Mammary epithelial cell (primary cell): ENCODE measurements at regions of chr3 and their contacts with region 1.

Region 1: DNA sequence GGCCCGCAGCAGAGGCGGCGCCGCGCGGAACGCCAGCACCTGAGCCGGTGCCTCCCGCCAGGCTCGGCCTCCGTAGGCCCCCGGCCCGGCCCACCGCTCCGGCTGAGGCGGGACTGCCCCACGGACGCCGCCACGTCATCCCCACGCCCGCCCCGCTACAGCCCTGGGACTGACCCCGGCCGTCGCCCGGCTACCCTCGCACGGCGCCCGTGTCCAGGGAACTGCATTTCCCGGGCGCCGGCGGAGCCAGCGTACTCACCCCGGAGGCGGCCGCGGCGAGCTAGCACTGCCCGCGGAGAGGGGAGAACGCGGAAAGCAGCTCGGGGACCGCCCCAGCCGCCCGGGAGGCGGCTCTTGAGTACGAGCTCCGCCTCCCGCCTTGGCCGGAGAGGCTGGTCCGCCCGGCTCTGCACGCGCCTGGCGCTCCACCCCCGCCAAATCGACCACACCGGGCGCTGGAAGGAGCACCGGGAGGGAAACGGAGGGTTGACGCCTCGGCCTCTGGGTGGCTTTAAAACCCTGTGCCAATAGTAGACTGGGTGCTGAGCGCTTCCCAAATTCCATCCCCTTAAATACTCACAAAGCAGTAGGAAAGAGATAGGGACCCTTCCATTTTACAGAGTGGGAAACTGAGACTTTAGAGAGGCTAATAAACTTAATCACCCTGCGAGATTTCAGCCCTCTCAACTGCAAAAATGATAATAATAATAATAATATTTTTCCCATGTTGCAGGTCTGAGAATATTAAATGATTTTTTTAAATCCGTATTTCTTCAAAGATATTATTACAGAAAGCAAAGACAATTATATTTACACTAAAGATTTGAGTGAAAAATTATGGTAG is at the start of gene B4GALT4:
- DNase-seq: peak; percentile 88
- H3K4me3 ChIP-seq: peak within 1 kb of the TSS; percentile 51 to 82 (median 73)
- H3K27ac ChIP-seq: peak within 1 kb of the TSS; percentile 72
- H3K4me1 ChIP-seq: peaks cover 9% of the 10 kb centered on the region
- H3K27me3 ChIP-seq: no peaks in the 10 kb centered on the region
- CTCF ChIP-seq: no peak
- total RNA-seq, gene B4GALT4: 18.3 to 34.8 TPM

Region 2: GRCh38 chr3:118884748-118885206 is 356.0 kb before region 1 on chr3:
- CTCF ChIA-PET with region 1: interaction called, 18 read pairs
- dilution Hi-C with region 1: no loop called
- in situ Hi-C with region 1: loop called (anchors 25 kb)
- intact Hi-C with region 1: loop called (anchors 1 kb)
- DNase-seq: peak; percentile 23
- H3K4me3 ChIP-seq: no peak overlapping the region
- H3K27ac ChIP-seq: no peak overlapping the region
- H3K4me1 ChIP-seq: no peaks in the 10 kb centered on the region
- H3K27me3 ChIP-seq: peaks cover 5% of the 10 kb centered on the region
- CTCF ChIP-seq: peak; percentile 91 to 96

Region 3: GRCh38 chr3:119145500-119146191 is 95.2 kb before region 1 on chr3 and contains the start of gene TEX55:
- CTCF ChIA-PET with region 1: interaction called, 7 read pairs
- dilution Hi-C with region 1: no loop called
- in situ Hi-C with region 1: loop called (anchors 10 kb)
- intact Hi-C with region 1: loop called (anchors 1 kb)
- DNase-seq: peak; percentile 66
- H3K4me3 ChIP-seq: no peak within 1 kb of the TSS
- H3K27ac ChIP-seq: no peak within 1 kb of the TSS
- H3K4me1 ChIP-seq: peaks cover 15% of the 10 kb centered on the region
- H3K27me3 ChIP-seq: no peaks in the 10 kb centered on the region
- CTCF ChIP-seq: peak; percentile 83 to 88
- total RNA-seq, gene TEX55: not detected

Region 4: GRCh38 chr3:119184796-119185570 is 55.8 kb before region 1 on chr3:
- CTCF ChIA-PET with region 1: interaction called, 11 read pairs
- dilution Hi-C with region 1: no loop called
- in situ Hi-C with region 1: no loop called
- intact Hi-C with region 1: no loop called
- DNase-seq: peak; percentile 88
- H3K4me3 ChIP-seq: no peak overlapping the region
- H3K27ac ChIP-seq: peak overlapping the region; percentile 74
- H3K4me1 ChIP-seq: peaks cover 40% of the 10 kb centered on the region
- H3K27me3 ChIP-seq: no peaks in the 10 kb centered on the region
- CTCF ChIP-seq: no peak

Region 5: DNA sequence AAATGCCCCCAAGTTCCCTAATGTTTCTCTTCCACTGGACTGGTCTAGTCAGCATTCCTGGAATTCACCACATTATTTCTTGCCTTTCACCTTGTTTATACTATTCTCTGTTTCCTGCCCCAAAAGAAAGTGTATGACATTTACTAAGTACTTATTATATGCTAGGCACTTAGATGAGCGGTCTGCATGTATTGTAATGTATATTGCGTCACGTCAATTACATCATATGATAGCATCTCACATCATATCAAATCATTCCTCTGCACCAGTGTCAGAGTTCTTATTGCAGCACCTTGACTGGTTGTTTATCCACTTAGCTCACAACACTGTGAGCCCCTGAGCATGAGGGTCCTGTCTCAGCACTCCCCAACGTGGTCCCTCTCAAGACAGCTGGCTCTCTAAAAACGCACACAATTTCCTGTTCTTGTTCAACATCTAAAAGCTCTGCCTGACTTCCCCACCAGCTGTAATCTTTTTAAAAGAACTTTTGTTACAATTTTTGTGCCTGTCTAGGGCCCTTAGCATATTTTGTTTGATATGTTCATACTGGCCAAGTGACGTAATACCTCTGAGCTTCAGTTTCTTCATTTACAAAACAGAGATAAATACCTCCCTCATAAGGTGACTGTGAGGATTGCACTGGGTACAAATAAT is 112.2 kb after region 1 on chr3:
- CTCF ChIA-PET with region 1: interaction called, 10 read pairs
- dilution Hi-C with region 1: no loop called
- in situ Hi-C with region 1: no loop called
- intact Hi-C with region 1: loop called (anchors 1 kb)
- DNase-seq: peak; percentile 11
- H3K4me3 ChIP-seq: no peak overlapping the region
- H3K27ac ChIP-seq: no peak overlapping the region
- H3K4me1 ChIP-seq: peaks cover 5% of the 10 kb centered on the region
- H3K27me3 ChIP-seq: no peaks in the 10 kb centered on the region
- CTCF ChIP-seq: peak; percentile 24 to 42